Caco-2 (cell line): ENCODE measurements at regions of chr7 and their contacts with region 1.

Region 1: DNA sequence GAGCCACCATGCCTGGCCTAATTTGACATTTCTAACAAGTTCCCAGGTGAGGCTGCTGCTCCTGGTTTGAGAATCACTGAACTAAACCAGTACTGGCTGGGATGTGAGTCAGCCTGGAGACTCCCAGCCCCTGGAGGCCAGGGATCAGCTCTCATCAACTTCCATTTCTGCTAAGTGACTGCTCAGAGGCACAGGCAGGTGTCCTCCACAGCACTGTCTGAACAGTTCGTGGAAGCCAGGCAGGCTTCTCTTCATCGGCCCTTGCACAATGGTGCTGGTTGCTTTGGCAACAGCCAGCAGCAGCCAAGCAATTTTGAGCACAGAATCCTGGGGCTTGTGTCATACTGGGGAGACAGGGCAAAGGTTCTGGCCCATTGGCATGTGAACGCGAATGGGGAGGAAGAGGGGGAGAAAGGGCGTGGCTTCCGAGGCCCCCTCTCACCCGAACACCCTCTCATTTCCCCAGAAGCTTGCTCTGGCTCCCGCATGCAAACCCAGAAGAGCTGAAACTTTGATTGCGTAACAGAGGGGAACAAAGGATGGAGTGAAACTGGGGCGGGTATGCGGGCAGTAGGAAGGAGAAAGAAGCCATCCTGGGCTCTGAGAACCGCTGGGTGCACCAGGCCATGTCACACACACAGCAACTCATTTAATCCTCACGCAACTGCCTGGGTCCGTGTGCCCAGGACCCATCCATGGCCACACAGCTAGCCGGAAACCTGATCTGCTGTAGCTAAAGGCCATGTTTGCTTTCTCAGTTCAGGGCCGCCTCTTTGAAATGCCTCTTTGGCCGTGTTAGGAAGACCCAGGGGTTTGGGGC is 9.0 kb upstream of the POR start:
- DNase-seq: peak; percentile 84 to 86
- H3K4me3 ChIP-seq: no peak overlapping the region
- H3K4me3 Mint-ChIP-seq: peak overlapping the region; percentile 34
- H3K27ac Mint-ChIP-seq: peak overlapping the region; percentile 90
- H3K4me1 ChIP-seq: peaks cover 24% of the 10 kb centered on the region
- H3K4me1 Mint-ChIP-seq: peaks cover 11% of the 10 kb centered on the region
- H3K27me3 ChIP-seq: no peaks in the 10 kb centered on the region
- H3K27me3 Mint-ChIP-seq: no peaks in the 10 kb centered on the region
- CTCF ChIP-seq: no peak

Region 2: DNA sequence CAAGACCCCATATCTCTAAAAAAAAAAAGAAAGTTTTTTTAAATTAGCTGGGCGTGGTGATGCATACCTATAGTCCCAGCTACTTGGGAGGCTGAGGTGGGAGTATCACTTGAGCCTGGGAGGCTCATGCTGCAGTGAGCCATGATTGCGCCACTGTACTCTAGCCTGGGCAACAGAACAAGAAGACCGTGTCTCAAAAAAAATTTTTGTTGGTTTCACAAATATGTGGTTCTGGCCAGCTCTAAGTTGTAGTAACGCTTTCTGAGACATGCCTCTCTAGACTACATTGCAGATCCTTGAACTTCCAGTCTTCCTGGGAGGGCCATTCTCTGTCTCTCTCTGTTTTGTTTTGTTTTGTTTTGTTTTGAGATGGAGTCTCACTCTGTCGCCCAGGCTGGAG is 51.8 kb before region 1 on chr7:
- CTCF ChIA-PET with region 1: no interaction called
- POLR2A ChIA-PET with region 1: no interaction called
- intact Hi-C with region 1: no loop called
- DNase-seq: no peak
- H3K4me3 ChIP-seq: no peak overlapping the region
- H3K4me3 Mint-ChIP-seq: no peak overlapping the region
- H3K27ac Mint-ChIP-seq: no peak overlapping the region
- H3K4me1 ChIP-seq: no peaks in the 10 kb centered on the region
- H3K4me1 Mint-ChIP-seq: no peaks in the 10 kb centered on the region
- H3K27me3 ChIP-seq: no peaks in the 10 kb centered on the region
- H3K27me3 Mint-ChIP-seq: no peaks in the 10 kb centered on the region
- CTCF ChIP-seq: no peak

Region 3: DNA sequence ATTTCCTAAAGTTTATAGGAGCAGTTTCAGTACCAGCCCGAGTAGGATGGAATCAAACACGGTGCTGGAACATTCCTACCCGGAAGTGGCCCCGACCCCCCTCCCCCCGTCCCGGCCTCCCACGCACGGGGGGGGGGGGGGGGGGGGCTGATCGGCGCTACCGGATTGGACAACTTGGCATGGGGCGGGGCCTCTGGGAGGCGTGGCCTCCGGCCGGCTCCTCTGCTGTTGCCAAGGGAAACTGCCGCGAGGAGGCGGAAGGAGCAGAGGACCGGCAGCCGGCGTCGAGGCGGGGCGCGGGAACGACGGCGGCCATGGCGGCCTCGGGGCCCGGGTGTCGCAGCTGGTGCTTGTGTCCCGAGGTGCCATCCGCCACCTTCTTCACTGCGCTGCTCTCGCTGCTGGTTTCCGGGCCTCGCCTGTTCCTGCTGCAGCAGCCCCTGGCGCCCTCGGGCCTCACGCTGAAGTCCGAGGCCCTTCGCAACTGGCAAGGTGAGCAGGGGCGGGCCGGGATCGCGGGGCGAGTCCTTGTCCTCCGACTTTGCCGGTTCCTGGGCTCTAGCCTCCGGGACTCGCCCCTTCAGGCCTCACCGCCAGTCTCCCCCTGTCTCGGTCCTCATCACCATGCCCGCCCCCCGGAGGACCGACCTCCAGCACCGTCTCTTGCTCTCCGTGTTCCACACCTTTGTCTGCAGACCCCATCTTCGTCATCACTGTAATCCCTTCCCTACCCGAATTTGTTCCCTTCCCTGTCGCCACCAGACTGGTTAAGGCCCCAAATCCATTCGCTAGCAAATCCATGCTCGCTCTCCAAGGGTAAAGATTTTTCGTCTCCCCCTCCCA is 27.0 kb before region 1 on chr7 and contains the start of gene RHBDD2:
- CTCF ChIA-PET with region 1: interaction called, 3 read pairs
- POLR2A ChIA-PET with region 1: no interaction called
- intact Hi-C with region 1: loop called (anchors 2 kb)
- DNase-seq: peak; percentile 95
- H3K4me3 ChIP-seq: peak within 1 kb of the TSS; percentile 81
- H3K4me3 Mint-ChIP-seq: peak within 1 kb of the TSS; percentile 94
- H3K27ac Mint-ChIP-seq: peak within 1 kb of the TSS; percentile 93
- H3K4me1 ChIP-seq: peaks cover 6% of the 10 kb centered on the region
- H3K4me1 Mint-ChIP-seq: peaks cover 8% of the 10 kb centered on the region
- H3K27me3 ChIP-seq: no peaks in the 10 kb centered on the region
- H3K27me3 Mint-ChIP-seq: no peaks in the 10 kb centered on the region
- CTCF ChIP-seq: peak in 1 of 2 experiments; percentile 10
- total RNA-seq, gene RHBDD2: 50.1 and 55.6 TPM in 2 replicates

Region 4: DNA sequence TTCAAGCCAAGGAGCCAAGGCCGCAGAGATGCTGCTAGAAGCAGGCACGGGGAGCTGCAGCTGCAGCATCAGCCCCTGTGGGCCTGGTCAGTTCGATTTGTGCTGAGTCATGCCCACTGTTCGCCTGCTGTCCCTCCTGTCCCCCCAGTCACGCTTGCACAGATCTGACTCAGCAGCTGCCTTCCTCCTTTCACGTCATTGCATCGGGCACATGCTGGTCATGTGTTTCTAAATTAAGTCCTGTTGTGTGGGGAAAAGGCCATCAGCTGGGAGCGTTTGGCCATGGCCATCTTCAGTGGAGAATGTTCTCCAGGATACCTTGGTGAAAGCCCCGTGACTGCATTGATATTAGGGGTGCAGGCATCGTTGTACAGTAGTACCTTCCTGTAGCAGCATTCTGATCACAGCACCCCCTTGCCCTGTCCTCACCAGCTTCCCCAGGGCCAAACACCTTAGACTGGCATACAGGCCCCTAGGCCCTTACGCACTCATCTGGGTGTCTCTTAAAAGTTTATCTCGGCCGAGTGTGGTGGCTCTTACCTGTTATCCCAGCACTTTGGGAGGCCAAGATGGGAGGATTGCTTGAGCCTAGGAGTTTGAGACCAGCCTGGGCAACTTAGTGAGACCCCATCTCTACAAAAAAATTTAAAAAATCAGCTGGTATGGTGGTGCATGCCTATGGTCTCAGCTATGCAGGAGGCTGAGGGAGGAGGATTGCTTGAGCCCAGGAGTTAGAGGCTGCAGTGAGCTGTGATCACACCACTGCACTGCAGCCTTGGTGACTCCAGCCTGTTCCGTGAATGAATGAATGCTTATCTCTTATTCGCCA is 32.2 kb after region 1 on chr7:
- CTCF ChIA-PET with region 1: no interaction called
- POLR2A ChIA-PET with region 1: interaction called, 12 read pairs
- intact Hi-C with region 1: no loop called
- DNase-seq: peak; percentile 46 to 59
- H3K4me3 ChIP-seq: no peak overlapping the region
- H3K4me3 Mint-ChIP-seq: no peak overlapping the region
- H3K27ac Mint-ChIP-seq: peak overlapping the region; percentile 43
- H3K4me1 ChIP-seq: peaks cover 15% of the 10 kb centered on the region
- H3K4me1 Mint-ChIP-seq: peaks cover 18% of the 10 kb centered on the region
- H3K27me3 ChIP-seq: no peaks in the 10 kb centered on the region
- H3K27me3 Mint-ChIP-seq: no peaks in the 10 kb centered on the region
- CTCF ChIP-seq: no peak

Region 5: GRCh38 chr7:75994388-75995051 is 88.5 kb after region 1 on chr7 and contains the start of gene TMEM120A:
- CTCF ChIA-PET with region 1: no interaction called
- POLR2A ChIA-PET with region 1: interaction called, 3 read pairs
- intact Hi-C with region 1: loop called (anchors 1 kb)
- DNase-seq: peak; percentile 96 to 98
- H3K4me3 ChIP-seq: peak within 1 kb of the TSS; percentile 89
- H3K4me3 Mint-ChIP-seq: peak within 1 kb of the TSS; percentile 80
- H3K27ac Mint-ChIP-seq: peak within 1 kb of the TSS; percentile 87
- H3K4me1 ChIP-seq: peaks cover 40% of the 10 kb centered on the region
- H3K4me1 Mint-ChIP-seq: peaks cover 30% of the 10 kb centered on the region
- H3K27me3 ChIP-seq: no peaks in the 10 kb centered on the region
- H3K27me3 Mint-ChIP-seq: no peaks in the 10 kb centered on the region
- CTCF ChIP-seq: no peak
- total RNA-seq, gene TMEM120A: 65.4 and 71.1 TPM in 2 replicates